ENCODE measurements at regions of chr19 and their contacts with region 1.

Region 1: DNA sequence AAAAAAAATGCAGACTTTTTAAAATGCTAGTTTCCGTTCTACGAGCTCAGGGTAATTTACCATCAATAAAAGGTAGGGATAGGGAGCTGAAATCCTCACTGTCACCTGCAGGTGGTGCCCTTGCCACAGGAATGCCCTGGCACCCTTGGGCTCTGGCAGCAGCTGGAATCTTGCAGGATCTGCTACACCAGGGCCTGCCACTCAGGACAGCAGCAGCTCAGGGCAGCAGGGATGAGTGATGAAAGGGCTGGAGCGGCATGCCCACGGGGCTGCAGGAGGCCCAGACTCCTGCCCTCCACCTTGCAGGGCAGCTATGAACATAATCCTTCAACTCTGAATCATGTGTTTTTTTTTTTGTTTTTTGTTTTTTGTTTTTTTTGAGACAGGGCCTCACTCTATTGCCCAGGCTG is 54.0 kb downstream of the GNG7 start:
- DNase-seq: peak; percentile 56
- ATAC-seq: peak; percentile 95
- H3K4me3 ChIP-seq: no peak overlapping the region
- H3K27ac ChIP-seq: no peak overlapping the region
- H3K4me1 ChIP-seq: peaks cover 22% of the 10 kb centered on the region
- H3K27me3 ChIP-seq: no peaks in the 10 kb centered on the region
- CTCF ChIP-seq: peak; percentile 81 to 98 (median 90)
- EP300 ChIP-seq: no peak
- POLR2A ChIP-seq: no peak
- RAD21 ChIP-seq: peak; percentile 97

Region 2: GRCh38 chr19:2569631-2570393 is 78.7 kb before region 1 on chr19:
- CTCF ChIA-PET with region 1: no interaction called
- POLR2A ChIA-PET with region 1: no interaction called
- RAD21 ChIA-PET with region 1: no interaction called
- SMC1A ChIA-PET with region 1: no interaction called
- in situ Hi-C with region 1: no loop called
- intact Hi-C with region 1: no loop called
- DNase-seq: no peak
- ATAC-seq: no peak
- H3K4me3 ChIP-seq: no peak overlapping the region
- H3K27ac ChIP-seq: no peak overlapping the region
- H3K4me1 ChIP-seq: no peaks in the 10 kb centered on the region
- H3K27me3 ChIP-seq: no peaks in the 10 kb centered on the region
- CTCF ChIP-seq: no peak
- EP300 ChIP-seq: no peak
- POLR2A ChIP-seq: no peak
- RAD21 ChIP-seq: no peak

Region 3: DNA sequence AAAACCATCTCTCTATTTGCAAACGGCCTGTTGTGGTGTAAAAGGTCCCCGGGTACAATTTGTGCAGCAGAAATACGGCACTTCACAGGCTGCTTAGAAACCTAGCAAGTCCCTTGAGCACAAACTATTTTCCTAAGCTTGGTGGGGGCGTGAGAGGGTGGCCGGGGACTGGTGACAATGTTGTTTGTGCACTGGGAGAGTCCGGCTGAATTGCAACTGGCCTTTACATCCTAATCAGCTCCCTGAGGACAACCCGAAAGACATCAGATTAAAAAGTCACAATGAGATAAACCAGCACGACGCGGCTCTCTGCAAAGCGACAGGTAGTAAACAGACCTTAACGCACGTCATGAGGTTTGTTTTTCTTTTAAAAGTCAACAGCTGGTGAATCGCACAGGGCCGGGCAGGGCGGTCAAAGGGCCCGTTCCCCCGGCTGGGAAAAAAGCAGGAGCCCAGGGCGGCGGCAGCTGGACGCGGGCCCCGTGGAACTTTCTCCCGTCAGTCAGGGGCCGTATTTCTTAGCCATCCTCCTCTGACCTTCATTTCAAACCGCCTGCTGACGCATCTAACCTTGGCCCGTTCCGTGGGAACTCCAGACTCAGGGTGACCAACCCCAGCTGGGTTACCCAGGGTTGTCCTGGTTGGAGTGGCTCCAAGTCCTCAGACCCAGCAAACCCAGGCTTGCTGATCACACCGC is 60.3 kb before region 1 on chr19:
- CTCF ChIA-PET with region 1: no interaction called
- POLR2A ChIA-PET with region 1: no interaction called
- RAD21 ChIA-PET with region 1: no interaction called
- SMC1A ChIA-PET with region 1: no interaction called
- in situ Hi-C with region 1: no loop called
- intact Hi-C with region 1: no loop called
- DNase-seq: no peak
- ATAC-seq: no peak
- H3K4me3 ChIP-seq: no peak overlapping the region
- H3K27ac ChIP-seq: no peak overlapping the region
- H3K4me1 ChIP-seq: no peaks in the 10 kb centered on the region
- H3K27me3 ChIP-seq: no peaks in the 10 kb centered on the region
- CTCF ChIP-seq: no peak
- EP300 ChIP-seq: no peak
- POLR2A ChIP-seq: no peak
- RAD21 ChIP-seq: no peak

Region 4: DNA sequence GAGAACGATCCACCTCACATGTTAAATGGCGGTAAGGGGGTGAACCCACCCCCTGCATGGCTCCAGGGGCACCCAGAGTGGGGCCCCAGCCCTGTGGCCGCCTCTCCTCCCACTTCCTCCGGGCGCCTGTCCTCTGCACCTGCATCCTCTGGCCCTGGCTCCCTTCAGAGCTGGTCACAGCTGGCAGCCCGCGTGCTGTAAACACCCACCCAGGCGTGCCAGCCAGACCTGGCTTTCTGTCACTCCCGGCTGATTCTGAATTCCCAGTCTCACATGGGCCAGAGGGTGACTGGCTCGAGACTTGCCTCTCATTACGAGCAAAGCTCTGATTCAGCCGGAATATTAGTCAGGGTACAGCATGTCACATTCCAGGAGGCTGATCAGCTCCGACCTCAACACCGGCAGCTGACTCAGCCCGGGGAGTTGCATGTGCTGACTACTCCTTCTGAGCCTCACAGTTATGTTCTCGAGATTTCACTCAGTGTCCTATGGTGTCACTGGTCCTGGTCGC is 21.2 kb before region 1 on chr19:
- CTCF ChIA-PET with region 1: interaction called, 17 read pairs
- POLR2A ChIA-PET with region 1: no interaction called
- RAD21 ChIA-PET with region 1: interaction called, 4 read pairs
- SMC1A ChIA-PET with region 1: interaction called, 3 read pairs
- in situ Hi-C with region 1: no loop called
- intact Hi-C with region 1: no loop called
- DNase-seq: no peak
- ATAC-seq: peak; percentile 52
- H3K4me3 ChIP-seq: no peak overlapping the region
- H3K27ac ChIP-seq: peak overlapping the region; percentile 45
- H3K4me1 ChIP-seq: peaks cover 55% of the 10 kb centered on the region
- H3K27me3 ChIP-seq: no peaks in the 10 kb centered on the region
- CTCF ChIP-seq: no peak
- EP300 ChIP-seq: no peak
- POLR2A ChIP-seq: peak; percentile 54; the same call in 1 of the 2 replicates
- RAD21 ChIP-seq: no peak

Region 5: GRCh38 chr19:2663920-2664571 is 15.5 kb after region 1 on chr19:
- CTCF ChIA-PET with region 1: interaction called, 30 read pairs
- POLR2A ChIA-PET with region 1: no interaction called
- RAD21 ChIA-PET with region 1: interaction called, 7 read pairs
- SMC1A ChIA-PET with region 1: interaction called, 11 read pairs
- in situ Hi-C with region 1: no loop called
- intact Hi-C with region 1: no loop called
- DNase-seq: no peak
- ATAC-seq: peak; percentile 92
- H3K4me3 ChIP-seq: no peak overlapping the region
- H3K27ac ChIP-seq: peak overlapping the region; percentile 47
- H3K4me1 ChIP-seq: peaks cover 23% of the 10 kb centered on the region
- H3K27me3 ChIP-seq: no peaks in the 10 kb centered on the region
- CTCF ChIP-seq: peak in 2 of 3 experiments; percentile 38 to 39; a peak in 3 of 6 replicates
- EP300 ChIP-seq: peak in 1 of 2 experiments; percentile 50; a peak in 1 of 4 replicates
- POLR2A ChIP-seq: no peak
- RAD21 ChIP-seq: peak; percentile 67

Region 6: GRCh38 chr19:2739602-2740313 is 91.2 kb after region 1 on chr19 and contains the start of gene SLC39A3:
- CTCF ChIA-PET with region 1: interaction called, 10 read pairs
- POLR2A ChIA-PET with region 1: no interaction called
- RAD21 ChIA-PET with region 1: interaction called, 7 read pairs
- SMC1A ChIA-PET with region 1: interaction called, 6 read pairs
- in situ Hi-C with region 1: no loop called
- intact Hi-C with region 1: no loop called
- DNase-seq: peak; percentile 87
- ATAC-seq: peak; percentile 100
- H3K4me3 ChIP-seq: peak within 1 kb of the TSS; percentile 98
- H3K27ac ChIP-seq: peak within 1 kb of the TSS; percentile 67
- H3K4me1 ChIP-seq: no peaks in the 10 kb centered on the region
- H3K27me3 ChIP-seq: no peaks in the 10 kb centered on the region
- CTCF ChIP-seq: no peak
- EP300 ChIP-seq: no peak
- POLR2A ChIP-seq: peak; percentile 81
- RAD21 ChIP-seq: 0 out of 2 replicates have a peak, but pooled peaks have one; percentile 8
- polyA plus RNA-seq, gene SLC39A3: 0.63 to 1.1 TPM

Region 7: DNA sequence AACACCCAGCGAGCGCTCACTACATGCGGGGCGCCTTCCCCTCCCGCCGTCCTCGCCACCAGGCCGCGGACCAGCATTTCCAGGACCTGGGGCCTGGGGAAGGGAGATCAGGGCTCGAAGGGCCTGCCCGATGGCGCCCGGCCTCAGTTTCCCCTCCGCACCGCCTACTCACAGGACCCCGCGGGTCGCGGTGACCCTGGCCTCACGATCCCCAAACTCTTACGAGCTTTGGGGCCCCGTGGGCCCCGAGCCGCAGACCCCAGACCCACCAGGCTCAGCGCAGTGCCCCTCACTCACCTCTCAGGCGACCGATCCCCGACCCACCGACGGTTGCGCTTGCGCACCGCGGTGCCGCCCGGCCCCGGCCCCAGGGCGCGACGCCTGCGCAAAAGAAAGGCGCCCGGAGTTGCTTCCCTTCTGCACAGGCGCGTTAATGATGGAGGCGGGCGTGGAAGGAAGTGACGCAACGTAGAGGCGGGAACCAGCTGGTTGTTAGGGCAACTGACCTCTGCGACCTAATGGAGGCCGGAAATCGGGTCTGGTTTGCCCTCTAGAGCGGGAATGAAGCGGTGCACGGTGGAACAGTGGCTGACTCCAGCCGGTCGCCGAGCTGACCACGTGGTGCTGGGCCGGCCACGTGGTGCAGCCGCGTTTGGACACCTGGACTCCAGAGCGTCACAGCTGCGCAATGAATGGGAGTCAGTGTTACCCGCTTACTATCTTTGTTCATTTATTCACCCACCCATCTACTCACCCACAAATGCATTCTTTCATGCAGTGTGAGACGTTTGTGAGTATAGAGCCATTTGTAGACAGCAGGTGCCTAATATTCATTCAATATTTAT is 134.6 kb after region 1 on chr19 and contains the start of gene SGTA:
- CTCF ChIA-PET with region 1: interaction called, 13 read pairs
- POLR2A ChIA-PET with region 1: interaction called, 5 read pairs
- RAD21 ChIA-PET with region 1: interaction called, 6 read pairs
- SMC1A ChIA-PET with region 1: interaction called, 8 read pairs
- in situ Hi-C with region 1: no loop called
- intact Hi-C with region 1: no loop called
- DNase-seq: peak; percentile 98
- ATAC-seq: peak; percentile 86
- H3K4me3 ChIP-seq: peak within 1 kb of the TSS; percentile 99
- H3K27ac ChIP-seq: peak within 1 kb of the TSS; percentile 85
- H3K4me1 ChIP-seq: peaks cover 19% of the 10 kb centered on the region
- H3K27me3 ChIP-seq: no peaks in the 10 kb centered on the region
- CTCF ChIP-seq: peak; percentile 42 to 67 (median 50); a peak in 5 of 6 replicates
- EP300 ChIP-seq: peak; percentile 33 to 50; a peak in 1 of 4 replicates
- POLR2A ChIP-seq: peak; percentile 88
- RAD21 ChIP-seq: no peak
- polyA plus RNA-seq, gene SGTA: 2.0 to 3.1 TPM

Region 8: GRCh38 chr19:2887391-2887914 is 238.9 kb after region 1 on chr19:
- CTCF ChIA-PET with region 1: interaction called, 17 read pairs
- POLR2A ChIA-PET with region 1: no interaction called
- RAD21 ChIA-PET with region 1: interaction called, 10 read pairs
- SMC1A ChIA-PET with region 1: interaction called, 4 read pairs
- in situ Hi-C with region 1: loop called (anchors 5 kb)
- intact Hi-C with region 1: loop called (anchors 5 kb)
- DNase-seq: no peak
- ATAC-seq: peak; percentile 89
- H3K4me3 ChIP-seq: no peak overlapping the region
- H3K27ac ChIP-seq: no peak overlapping the region
- H3K4me1 ChIP-seq: peaks cover 3% of the 10 kb centered on the region; the same call in 1 of the 2 replicates
- H3K27me3 ChIP-seq: no peaks in the 10 kb centered on the region
- CTCF ChIP-seq: peak; percentile 61 to 65 (median 61)
- EP300 ChIP-seq: no peak
- POLR2A ChIP-seq: no peak
- RAD21 ChIP-seq: peak; percentile 60